ENCODE measurements at regions of chr18 and their contacts with region 1.

Region 1: GRCh38 chr18:3995476-3996102 is 459.5 kb downstream of the DLGAP1 start:
- DNase-seq: peak; percentile 54
- H3K4me3 ChIP-seq: no peak overlapping the region
- H3K27ac ChIP-seq: no peak overlapping the region
- H3K27me3 ChIP-seq: no peaks in the 10 kb centered on the region
- CTCF ChIP-seq: peak; percentile 93

Region 2: DNA sequence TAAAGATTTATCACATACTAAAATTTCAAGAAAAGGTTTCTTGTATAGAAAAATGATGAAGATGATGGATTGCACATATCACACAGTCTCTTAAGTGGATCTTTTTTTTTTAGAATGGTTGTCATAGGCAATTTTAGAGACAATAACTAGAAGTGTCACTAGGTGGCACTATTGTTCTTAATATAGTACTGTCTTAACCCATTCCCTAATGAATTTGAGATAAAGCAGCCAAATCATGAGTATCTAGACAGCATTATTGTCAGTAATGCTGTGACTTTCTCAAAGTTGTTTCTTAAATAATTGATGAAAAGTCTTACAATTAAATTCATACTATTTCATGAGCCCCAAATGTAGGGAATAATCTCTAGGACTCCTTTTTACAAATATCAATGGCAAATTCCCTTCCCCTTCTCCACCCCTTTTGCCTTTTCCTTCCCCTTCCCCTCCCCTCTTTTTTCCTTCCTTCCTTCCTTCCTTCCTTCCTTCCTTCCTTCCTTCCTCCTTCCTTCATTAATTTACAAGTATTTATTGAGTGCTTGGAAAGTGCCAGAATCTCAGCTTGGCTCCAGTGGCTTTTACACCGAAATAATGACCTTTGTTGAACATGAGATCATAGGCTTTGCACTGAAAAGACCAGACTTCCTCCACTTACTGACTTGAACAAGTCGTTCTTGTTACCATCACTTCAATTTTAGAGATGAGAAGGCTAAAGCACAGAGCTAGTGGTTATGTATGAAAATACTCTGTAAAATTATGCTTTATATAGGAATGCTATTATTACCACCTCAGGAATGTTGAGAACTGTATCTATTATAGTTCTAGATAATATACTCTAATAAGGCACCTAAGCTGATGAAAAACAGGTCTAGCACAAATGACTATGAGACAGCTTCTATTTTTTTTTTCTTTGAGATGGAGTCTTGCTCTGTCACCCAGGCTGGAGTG is 713.9 kb before region 1 on chr18:
- CTCF ChIA-PET with region 1: interaction called, 13 read pairs
- POLR2A ChIA-PET with region 1: no interaction called
- DNase-seq: no peak
- H3K4me3 ChIP-seq: no peak overlapping the region
- H3K27ac ChIP-seq: no peak overlapping the region
- H3K27me3 ChIP-seq: no peaks in the 10 kb centered on the region
- CTCF ChIP-seq: peak; percentile 51

Region 3: DNA sequence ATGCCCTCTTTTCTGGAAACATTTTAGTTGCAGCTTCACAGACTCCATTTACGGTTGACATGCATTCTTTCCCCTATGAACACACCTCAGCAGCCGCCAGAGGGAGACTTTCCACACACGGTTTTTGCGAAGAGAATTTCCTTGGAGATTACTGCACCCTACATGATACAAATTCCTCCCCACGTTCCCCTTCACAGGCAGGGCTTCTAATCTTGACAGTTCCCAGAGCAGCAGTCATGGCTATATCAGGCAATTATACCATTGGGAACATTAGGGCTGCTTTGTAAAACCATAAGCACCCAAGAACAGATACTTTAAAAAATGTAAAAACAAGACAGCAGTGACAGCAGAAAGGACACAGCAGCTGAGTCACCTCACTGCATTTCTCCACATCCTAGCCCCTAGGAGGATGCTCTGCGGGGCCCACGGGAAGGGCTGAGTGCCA is 291.8 kb before region 1 on chr18:
- CTCF ChIA-PET with region 1: interaction called, 36 read pairs
- POLR2A ChIA-PET with region 1: no interaction called
- DNase-seq: peak; percentile 42
- H3K4me3 ChIP-seq: no peak overlapping the region
- H3K27ac ChIP-seq: peak overlapping the region; percentile 2
- H3K27me3 ChIP-seq: no peaks in the 10 kb centered on the region
- CTCF ChIP-seq: peak; percentile 91

Region 4: GRCh38 chr18:3722320-3723000 is 273.1 kb before region 1 on chr18:
- CTCF ChIA-PET with region 1: interaction called, 28 read pairs
- POLR2A ChIA-PET with region 1: no interaction called
- DNase-seq: no peak
- H3K4me3 ChIP-seq: no peak overlapping the region
- H3K27ac ChIP-seq: peak overlapping the region; percentile 47
- H3K27me3 ChIP-seq: no peaks in the 10 kb centered on the region
- CTCF ChIP-seq: no peak

Region 5: GRCh38 chr18:3789525-3789924 is 206.1 kb before region 1 on chr18:
- CTCF ChIA-PET with region 1: interaction called, 15 read pairs
- POLR2A ChIA-PET with region 1: no interaction called
- DNase-seq: no peak
- H3K4me3 ChIP-seq: no peak overlapping the region
- H3K27ac ChIP-seq: no peak overlapping the region
- H3K27me3 ChIP-seq: no peaks in the 10 kb centered on the region
- CTCF ChIP-seq: no peak

Region 6: DNA sequence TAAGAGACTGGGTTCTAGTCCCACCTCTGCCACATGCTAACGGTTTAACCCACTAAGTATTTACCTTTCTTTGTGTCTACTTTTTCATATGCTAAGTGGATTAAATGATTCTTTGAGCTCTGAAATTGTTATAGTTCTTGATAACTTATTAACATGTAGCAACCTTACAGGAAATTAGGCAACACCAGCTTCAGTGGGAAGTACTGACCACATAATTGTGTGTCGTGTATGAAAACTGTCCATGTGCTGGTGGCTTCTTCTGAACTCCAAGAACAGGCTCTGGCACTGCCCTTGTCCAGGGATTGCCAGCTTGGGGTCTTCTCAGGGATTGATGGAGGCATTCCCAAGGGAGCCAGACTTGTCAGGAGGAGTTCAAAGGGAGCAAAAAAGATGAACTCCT is 117.9 kb before region 1 on chr18:
- CTCF ChIA-PET with region 1: interaction called, 18 read pairs
- POLR2A ChIA-PET with region 1: no interaction called
- DNase-seq: no peak
- H3K4me3 ChIP-seq: no peak overlapping the region
- H3K27ac ChIP-seq: no peak overlapping the region
- H3K27me3 ChIP-seq: peaks cover 2% of the 10 kb centered on the region
- CTCF ChIP-seq: no peak

Region 7: DNA sequence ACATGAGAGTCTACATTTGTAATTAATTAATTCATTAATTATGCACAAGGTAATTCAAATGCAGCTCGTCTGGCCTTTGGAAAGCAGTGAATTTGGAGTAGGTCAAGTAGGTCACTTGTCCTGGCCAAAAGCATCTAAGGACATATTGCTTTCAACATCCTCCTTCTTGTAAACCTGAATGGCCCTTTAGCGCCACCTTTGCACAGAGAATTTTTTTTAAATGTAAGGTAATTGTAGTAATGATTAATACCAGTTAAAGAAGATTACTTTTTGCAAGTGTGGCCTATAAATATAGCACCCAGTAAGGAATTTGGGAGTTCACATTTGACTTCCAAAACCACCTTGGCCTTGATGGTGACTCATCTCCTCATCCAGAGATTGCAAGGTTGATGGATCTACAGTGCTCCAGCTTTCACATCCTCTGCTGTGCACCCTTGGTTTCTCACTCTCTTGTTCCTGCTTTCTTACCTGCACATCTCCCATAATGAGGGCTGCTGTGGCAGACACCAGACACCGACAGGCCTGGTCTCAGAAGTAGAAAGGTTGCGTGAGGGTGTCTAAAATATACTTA is 64.0 kb before region 1 on chr18:
- CTCF ChIA-PET with region 1: interaction called, 12 read pairs
- POLR2A ChIA-PET with region 1: no interaction called
- DNase-seq: no peak
- H3K4me3 ChIP-seq: no peak overlapping the region
- H3K27ac ChIP-seq: no peak overlapping the region
- H3K27me3 ChIP-seq: no peaks in the 10 kb centered on the region
- CTCF ChIP-seq: no peak

Region 8: GRCh38 chr18:4026542-4026941 is 31.0 kb after region 1 on chr18:
- CTCF ChIA-PET with region 1: no interaction called
- POLR2A ChIA-PET with region 1: no interaction called
- DNase-seq: no peak
- H3K4me3 ChIP-seq: no peak overlapping the region
- H3K27ac ChIP-seq: no peak overlapping the region
- H3K27me3 ChIP-seq: no peaks in the 10 kb centered on the region
- CTCF ChIP-seq: no peak

Measured in AG04450 (cell line).